GM13977 (cell line): ENCODE measurements at regions of chr2 and their contacts with region 1.

Region 1: GRCh38 chr2:151459358-151459757 is 49.7 kb downstream of the RIF1 start:
- DNase-seq: no peak
- CTCF ChIP-seq: no peak

Region 2: GRCh38 chr2:152012697-152013096 is 553.3 kb after region 1 on chr2:
- in situ Hi-C with region 1: loop called (anchors 25 kb)
- DNase-seq: no peak
- CTCF ChIP-seq: no peak